ENCODE measurements at regions of chr5 and their contacts with region 1.

Region 1: DNA sequence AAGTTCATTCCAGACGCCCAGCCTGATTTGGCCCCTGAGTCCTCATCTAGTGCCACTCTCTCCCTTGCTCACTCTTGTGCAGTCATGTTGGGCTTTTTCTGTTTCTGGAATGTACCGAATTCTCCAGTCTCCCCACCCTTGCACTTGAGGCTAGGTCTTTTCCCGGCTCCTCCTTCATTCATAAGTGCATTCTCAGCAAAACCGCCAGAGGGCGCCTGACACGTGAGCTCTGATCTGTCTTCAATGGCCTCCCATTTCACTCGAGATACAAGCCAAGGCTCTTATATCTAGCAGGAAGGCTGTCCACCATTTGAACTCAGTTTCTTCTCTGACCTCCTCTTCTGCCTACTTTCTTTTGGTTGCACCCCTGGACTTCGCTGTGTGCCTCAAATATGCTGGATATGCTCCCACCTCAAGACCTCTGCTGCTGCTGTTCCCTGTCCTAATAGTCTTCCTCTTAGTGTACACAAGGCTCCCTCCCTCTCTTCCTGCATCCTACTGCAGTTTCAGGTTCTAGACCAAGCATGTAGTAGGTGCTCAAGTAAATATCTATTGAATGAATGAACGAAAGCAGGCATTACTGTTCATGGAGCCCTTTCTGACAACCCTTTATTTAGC is 568.1 kb upstream of the WWC1 start:
- DNase-seq: peak; percentile 57
- ATAC-seq: peak; percentile 96
- H3K4me3 ChIP-seq: no peak overlapping the region
- H3K27ac ChIP-seq: no peak overlapping the region
- H3K4me1 ChIP-seq: peaks cover 2% of the 10 kb centered on the region; the same call in 1 of the 2 replicates
- H3K27me3 ChIP-seq: no peaks in the 10 kb centered on the region
- CTCF ChIP-seq: peak; percentile 92

Region 2: DNA sequence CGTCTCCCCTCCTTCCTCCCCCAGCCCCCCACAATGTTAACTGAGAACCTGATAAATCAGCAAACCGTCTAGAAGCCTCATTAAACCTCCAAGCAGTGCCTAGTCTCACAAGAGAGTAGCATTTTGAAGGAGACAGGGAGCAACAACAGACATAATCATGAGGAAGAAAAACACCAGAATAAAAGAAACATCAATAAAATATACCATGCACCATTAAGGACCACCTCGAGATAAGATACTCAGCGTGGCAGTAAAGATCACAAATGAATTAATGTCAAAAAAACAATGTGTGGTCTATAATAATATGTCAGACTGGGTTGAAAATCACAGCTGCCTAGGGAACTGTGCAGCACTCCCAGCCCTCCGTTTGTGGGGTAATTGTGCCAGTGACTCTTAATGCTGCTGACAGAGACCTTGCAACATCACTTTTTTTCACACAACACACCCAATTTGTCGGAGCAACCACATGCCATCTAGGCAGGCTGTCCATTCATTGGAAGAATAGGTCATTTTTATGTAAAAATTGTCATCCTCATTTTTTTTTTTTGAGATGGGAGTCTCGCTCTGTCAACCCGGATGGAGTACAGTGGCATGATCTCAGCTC is 117.3 kb after region 1 on chr5:
- CTCF ChIA-PET with region 1: no interaction called
- POLR2A ChIA-PET with region 1: no interaction called
- in situ Hi-C with region 1: no loop called
- intact Hi-C with region 1: no loop called
- DNase-seq: no peak
- ATAC-seq: no peak
- H3K4me3 ChIP-seq: no peak overlapping the region
- H3K27ac ChIP-seq: no peak overlapping the region
- H3K4me1 ChIP-seq: no peaks in the 10 kb centered on the region
- H3K27me3 ChIP-seq: 0 out of 2 replicates have a peak, but pooled peaks cover 3% of the 10 kb centered on the region
- CTCF ChIP-seq: no peak

Region 3: DNA sequence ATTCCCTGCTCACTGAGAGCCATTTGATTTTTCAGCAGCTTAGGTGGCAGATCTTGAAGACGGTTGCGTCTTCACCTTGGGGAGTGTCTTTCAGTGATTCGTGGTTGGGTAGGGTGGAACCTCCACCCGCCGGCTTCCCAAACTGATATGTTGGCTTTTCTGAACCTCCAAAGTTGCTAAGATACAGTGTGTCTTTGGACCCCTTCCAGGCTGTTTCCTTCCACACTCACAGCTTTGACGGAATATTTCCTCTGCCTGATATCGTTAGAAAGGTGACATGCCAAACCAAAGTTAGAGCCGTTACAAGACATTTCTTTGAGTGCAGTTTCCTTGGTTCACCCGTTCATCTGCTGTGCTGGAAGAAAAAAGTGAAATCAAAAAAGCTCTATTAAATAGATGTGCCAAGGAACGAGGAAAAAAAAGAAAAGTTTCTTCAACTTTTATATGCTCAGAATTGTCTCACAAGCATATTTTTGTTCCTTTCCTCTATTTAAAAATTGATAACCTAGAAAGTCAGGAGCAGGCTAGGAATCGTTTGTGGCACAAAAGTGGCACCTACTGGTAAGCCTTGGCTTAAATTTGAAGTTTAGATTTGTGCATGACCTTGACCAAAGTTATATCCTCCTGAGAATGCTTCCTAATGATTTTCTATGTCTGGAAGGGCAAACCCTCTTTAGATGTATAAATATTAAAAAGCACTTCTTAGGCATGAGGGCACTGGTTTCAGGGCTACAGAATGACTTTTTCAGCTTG is 297.4 kb after region 1 on chr5:
- CTCF ChIA-PET with region 1: no interaction called
- POLR2A ChIA-PET with region 1: no interaction called
- in situ Hi-C with region 1: no loop called
- intact Hi-C with region 1: loop called (anchors 10 kb)
- DNase-seq: no peak
- ATAC-seq: no peak
- H3K4me3 ChIP-seq: no peak overlapping the region
- H3K27ac ChIP-seq: no peak overlapping the region
- H3K4me1 ChIP-seq: no peaks in the 10 kb centered on the region
- H3K27me3 ChIP-seq: peaks cover 2% of the 10 kb centered on the region
- CTCF ChIP-seq: peak; percentile 42; the same call in 1 of the 2 replicates

Region 4: DNA sequence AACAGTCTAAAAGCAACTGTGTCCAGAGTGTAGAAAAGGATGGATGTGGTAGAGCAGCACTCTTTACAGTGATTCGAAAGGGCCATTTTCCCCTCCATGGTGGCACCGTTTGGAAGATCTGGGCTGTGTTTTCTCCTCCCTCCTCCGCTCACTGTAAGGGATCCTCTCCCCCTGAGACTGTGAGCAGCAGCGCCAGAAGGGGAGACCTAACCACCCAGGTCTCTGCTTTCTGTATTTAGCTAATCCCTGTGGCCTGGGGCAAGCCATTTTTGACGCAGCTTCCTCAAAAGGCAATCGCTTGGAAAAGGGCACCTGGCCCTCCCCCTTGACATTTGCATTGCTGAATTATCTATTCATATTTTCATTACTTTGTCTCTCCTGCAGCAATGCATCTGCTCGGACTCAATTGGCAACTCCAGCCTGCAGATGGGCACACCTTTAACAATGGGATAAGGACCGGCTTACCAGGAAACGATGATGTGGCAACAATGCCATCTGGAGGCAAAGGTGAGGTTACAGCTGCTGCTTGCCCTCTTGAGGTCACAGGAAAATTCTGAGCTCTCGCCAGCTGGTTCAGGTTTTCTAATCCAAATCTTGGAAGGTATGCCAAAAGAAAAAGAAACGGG is 323.8 kb after region 1 on chr5:
- CTCF ChIA-PET with region 1: no interaction called
- POLR2A ChIA-PET with region 1: no interaction called
- in situ Hi-C with region 1: no loop called
- intact Hi-C with region 1: loop called (anchors 2 kb)
- DNase-seq: peak; percentile 15
- ATAC-seq: peak; percentile 95
- H3K4me3 ChIP-seq: no peak overlapping the region
- H3K27ac ChIP-seq: no peak overlapping the region
- H3K4me1 ChIP-seq: no peaks in the 10 kb centered on the region
- H3K27me3 ChIP-seq: peaks cover 5% of the 10 kb centered on the region
- CTCF ChIP-seq: peak; percentile 76